Breast epithelium (tissue), 4 donors: ENCODE measurements at regions of chr14 and their contacts with region 1.

Region 1: GRCh38 chr14:75373616-75374015 is 54.2 kb upstream of the JDP2 start:
- DNase-seq: no peak
- H3K4me3 ChIP-seq: no peak overlapping the region
- H3K27ac ChIP-seq: no peak overlapping the region
- H3K4me1 ChIP-seq: peaks cover 0 to 4% of the 10 kb centered on the region in 2 donors
- H3K27me3 ChIP-seq: no peaks in the 10 kb centered on the region
- CTCF ChIP-seq: no peak
- POLR2A ChIP-seq: no peak

Region 2: GRCh38 chr14:75449696-75450095 is 76.1 kb after region 1 on chr14:
- intact Hi-C with region 1: loop called (anchors 2 kb)
- DNase-seq: no peak
- H3K4me3 ChIP-seq: no peak overlapping the region
- H3K27ac ChIP-seq: peak overlapping the region; percentile 64 to 87
- H3K4me1 ChIP-seq: peaks cover 15 to 47% of the 10 kb centered on the region in 2 donors
- H3K27me3 ChIP-seq: no peaks in the 10 kb centered on the region
- CTCF ChIP-seq: no peak
- POLR2A ChIP-seq: no peak